ENCODE measurements at regions of chr11 and their contacts with region 1.

Region 1: GRCh38 chr11:66222358-66223149 is 45.9 kb upstream of the RAB1B start:
- DNase-seq: peak; percentile 86 to 93
- ATAC-seq: peak; percentile 94 to 99 (median 98)
- H3K4me3 ChIP-seq: no peak overlapping the region
- H3K27ac ChIP-seq: no peak overlapping the region
- H3K4me1 ChIP-seq: no peaks in the 10 kb centered on the region
- H3K27me3 ChIP-seq: no peaks in the 10 kb centered on the region
- CTCF ChIP-seq: peak; percentile 98

Region 2: DNA sequence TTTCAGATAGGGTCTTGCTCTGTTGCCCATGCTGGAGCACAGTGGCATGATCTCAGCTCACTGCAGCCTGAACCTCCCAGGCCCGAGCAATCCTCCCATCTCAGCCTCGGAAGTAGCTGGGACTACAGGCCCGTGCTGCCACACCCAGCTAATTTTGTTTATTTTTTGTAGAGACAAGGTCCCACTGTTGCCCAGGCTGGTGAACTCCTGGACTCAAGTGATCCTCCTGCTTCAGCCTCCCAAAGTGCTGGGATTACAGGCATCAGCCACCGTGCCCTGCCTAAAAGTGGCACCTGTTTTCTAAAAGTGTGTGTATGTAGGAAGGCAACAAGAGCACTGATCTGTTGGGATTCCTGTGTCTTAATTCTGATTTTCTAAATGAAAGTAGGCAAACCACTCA is 132.3 kb before region 1 on chr11:
- intact Hi-C with region 1: no loop called
- DNase-seq: no peak
- ATAC-seq: no peak
- H3K4me3 ChIP-seq: no peak overlapping the region
- H3K27ac ChIP-seq: no peak overlapping the region
- H3K4me1 ChIP-seq: peaks cover 4% of the 10 kb centered on the region
- H3K27me3 ChIP-seq: no peaks in the 10 kb centered on the region
- CTCF ChIP-seq: no peak

Region 3: GRCh38 chr11:66258473-66258893 is 35.9 kb after region 1 on chr11:
- intact Hi-C with region 1: loop called (anchors 1 kb)
- DNase-seq: no peak
- ATAC-seq: peak in 2 of 4 donors; percentile 2 to 3
- H3K4me3 ChIP-seq: peak overlapping the region; percentile 95
- H3K27ac ChIP-seq: peak overlapping the region; percentile 74
- H3K4me1 ChIP-seq: peaks cover 6% of the 10 kb centered on the region
- H3K27me3 ChIP-seq: no peaks in the 10 kb centered on the region
- CTCF ChIP-seq: no peak

Region 4: DNA sequence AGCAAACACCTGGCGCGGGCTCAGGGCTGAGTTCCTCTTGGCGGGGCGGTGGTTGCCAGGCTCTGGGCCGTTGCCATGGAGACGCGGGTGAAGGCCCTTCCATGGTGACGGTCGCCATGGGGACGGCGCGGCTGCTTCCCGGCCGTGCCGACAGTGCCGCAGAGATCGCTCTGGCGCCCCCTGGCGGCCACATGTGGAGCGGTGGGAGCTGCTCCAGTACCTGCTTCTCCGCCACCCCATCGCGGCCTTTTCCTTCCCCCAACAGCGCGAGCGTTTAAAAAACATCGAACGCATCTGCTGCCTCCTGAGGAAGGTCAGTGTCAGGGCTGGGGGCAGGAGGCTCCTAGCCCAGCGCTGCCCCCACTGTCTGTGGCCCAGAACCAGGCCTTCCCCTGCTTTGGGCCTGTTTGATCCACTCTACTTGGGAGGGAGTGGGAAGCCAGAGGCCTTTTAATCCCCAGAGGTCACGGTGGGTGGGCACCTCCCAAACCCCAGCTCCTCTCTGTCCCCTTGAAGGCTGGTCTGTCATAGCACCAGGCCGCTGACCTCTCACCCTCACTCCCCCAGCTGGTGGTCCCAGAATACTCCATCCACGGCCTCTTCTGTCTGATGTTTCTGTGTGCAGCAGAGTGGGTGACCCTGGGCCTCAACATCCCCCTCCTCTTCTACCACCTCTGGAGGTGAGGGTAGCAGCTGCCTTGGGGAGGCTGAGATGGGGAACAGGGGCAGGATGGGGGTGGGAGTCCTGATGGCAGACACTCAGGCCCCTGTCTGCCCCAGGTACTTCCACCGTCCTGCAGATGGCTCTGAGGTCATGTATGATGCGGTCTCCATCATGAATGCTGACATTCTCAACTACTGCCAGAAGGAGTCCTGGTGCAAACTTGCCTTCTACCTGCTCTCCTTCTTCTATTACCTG is 60.2 kb after region 1 on chr11:
- intact Hi-C with region 1: loop called in 1 of 2 experiments (anchors 1 kb)
- DNase-seq: peak; percentile 98 to 99
- ATAC-seq: peak; percentile 87 to 94 (median 88)
- H3K4me3 ChIP-seq: no peak overlapping the region
- H3K27ac ChIP-seq: no peak overlapping the region
- H3K4me1 ChIP-seq: peaks cover 8% of the 10 kb centered on the region
- H3K27me3 ChIP-seq: peaks cover 0 to 7% (median 0%) of the 10 kb centered on the region in 3 donors
- CTCF ChIP-seq: peak; percentile 99

Region 5: DNA sequence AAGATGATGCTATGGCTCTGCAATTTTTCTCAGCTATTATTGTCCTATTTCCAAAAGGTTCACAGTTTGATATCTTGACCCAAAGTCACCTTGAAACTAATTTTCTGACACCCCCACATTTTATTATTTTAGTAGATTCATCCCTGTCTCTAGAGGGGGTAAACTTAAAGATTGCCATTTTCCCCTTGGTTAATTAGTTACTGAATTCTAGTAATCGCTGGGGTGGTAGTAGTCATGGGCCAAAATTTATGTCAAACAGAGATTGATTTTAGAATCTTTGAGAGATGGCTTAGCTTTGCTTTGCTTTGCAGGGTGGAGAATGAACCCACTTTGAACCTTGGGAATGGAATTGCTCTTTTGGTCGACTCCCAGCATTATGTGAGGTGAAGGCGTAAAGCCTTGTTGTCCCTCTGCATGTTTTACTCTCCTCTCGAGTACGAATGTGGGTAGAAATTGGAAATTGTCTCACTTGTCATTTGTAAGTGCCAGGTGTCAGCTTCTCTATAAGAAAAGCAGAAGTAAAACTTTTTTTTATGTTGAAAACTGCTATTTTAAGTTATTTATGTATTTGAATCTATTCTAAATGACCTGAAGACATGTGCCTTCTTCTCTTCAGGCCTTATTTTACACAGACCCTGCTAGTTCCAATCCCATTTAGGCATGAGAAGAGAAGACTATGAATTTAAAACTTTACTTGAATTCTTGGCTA is 578.3 kb after region 1 on chr11:
- intact Hi-C with region 1: no loop called
- DNase-seq: no peak
- ATAC-seq: no peak
- H3K4me3 ChIP-seq: no peak overlapping the region
- H3K27ac ChIP-seq: no peak overlapping the region
- H3K4me1 ChIP-seq: no peaks in the 10 kb centered on the region
- H3K27me3 ChIP-seq: no peaks in the 10 kb centered on the region
- CTCF ChIP-seq: no peak

Measured in psoas muscle (tissue), 8 donors.